CD8-positive, alpha-beta T cell (primary cell): ENCODE measurements at regions of chr10 and their contacts with region 1.

Region 1: DNA sequence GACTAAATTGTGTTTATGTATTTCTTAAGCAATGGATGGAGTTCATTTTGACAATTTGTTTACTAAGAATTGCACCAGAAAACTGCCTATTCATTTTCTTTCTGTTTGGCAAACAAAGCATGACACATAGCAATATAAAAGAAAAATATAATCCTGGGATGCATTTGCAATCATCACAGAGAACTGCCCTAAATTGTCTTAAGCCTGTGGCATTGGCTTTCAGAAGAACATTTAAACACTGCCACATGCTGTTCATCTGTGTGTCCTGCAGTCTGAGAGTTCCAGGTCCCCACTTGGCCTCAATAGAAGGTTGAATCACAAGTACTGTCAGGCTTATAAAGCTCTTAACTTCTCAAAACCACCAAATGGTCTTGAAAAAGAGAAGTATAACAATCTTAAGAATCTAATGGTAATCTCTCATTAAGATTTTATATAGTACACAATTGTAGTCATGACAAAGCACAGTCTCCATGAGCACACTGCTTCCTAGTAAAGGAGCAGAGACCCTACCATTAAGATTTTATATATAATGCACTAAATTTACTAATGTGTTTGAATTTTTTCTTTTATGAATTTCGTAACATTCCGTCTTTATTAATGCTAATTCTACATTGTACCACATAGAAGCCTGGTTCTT is 29.9 kb downstream of the RNLS start:
- DNase-seq: peak in 6 of 9 experiments; percentile 7 to 71 (median 28)
- ATAC-seq: peak; percentile 82
- H3K4me3 ChIP-seq: no peak overlapping the region
- H3K4me3 Mint-ChIP-seq: no peak overlapping the region
- H3K27ac ChIP-seq: no peak overlapping the region
- H3K27ac Mint-ChIP-seq: no peak overlapping the region
- H3K4me1 ChIP-seq: no peaks in the 10 kb centered on the region
- H3K4me1 Mint-ChIP-seq: no peaks in the 10 kb centered on the region
- H3K27me3 ChIP-seq: no peaks in the 10 kb centered on the region
- H3K27me3 Mint-ChIP-seq: no peaks in the 10 kb centered on the region
- CTCF ChIP-seq: peak; percentile 77

Region 2: DNA sequence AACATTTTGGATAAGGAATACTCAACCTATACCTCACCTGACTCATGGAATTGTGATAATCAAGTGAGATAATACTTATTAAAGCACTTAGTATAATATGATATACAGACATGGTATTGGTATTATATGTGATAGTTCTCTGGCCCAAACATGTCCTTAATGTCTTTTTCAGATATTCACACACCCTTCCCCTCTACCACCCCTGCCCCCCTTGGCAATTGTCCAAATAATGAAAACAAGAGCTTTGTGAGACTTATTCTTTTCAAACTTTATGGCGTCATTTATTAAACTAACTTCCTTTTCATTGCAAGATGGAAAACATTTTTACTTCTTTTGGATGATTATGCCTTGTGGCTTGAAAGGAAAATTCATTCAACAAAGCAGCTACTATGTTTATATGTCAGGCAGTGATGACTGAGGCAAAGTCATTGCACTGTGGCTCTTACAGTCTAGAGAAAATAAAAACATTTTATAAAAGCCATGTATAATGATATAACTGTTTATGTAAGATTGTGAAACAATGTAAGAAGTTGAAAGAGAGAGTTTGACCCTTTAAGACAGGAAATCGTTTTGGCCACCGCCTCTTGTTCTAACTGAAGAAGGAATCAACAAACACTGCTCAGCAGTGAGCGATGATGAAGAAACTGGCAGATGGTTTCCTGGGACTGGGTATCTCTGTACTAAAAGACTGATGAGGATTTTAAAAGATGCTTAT is 1021.2 kb before region 1 on chr10:
- CTCF ChIA-PET with region 1: no interaction called
- POLR2A ChIA-PET with region 1: no interaction called
- intact Hi-C with region 1: loop called (anchors 5 to 10 kb)
- DNase-seq: no peak
- ATAC-seq: no peak
- H3K4me3 ChIP-seq: no peak overlapping the region
- H3K4me3 Mint-ChIP-seq: no peak overlapping the region
- H3K27ac ChIP-seq: no peak overlapping the region
- H3K27ac Mint-ChIP-seq: no peak overlapping the region
- H3K4me1 ChIP-seq: no peaks in the 10 kb centered on the region
- H3K4me1 Mint-ChIP-seq: peaks cover 17% of the 10 kb centered on the region
- H3K27me3 ChIP-seq: no peaks in the 10 kb centered on the region
- H3K27me3 Mint-ChIP-seq: no peaks in the 10 kb centered on the region
- CTCF ChIP-seq: no peak

Region 3: DNA sequence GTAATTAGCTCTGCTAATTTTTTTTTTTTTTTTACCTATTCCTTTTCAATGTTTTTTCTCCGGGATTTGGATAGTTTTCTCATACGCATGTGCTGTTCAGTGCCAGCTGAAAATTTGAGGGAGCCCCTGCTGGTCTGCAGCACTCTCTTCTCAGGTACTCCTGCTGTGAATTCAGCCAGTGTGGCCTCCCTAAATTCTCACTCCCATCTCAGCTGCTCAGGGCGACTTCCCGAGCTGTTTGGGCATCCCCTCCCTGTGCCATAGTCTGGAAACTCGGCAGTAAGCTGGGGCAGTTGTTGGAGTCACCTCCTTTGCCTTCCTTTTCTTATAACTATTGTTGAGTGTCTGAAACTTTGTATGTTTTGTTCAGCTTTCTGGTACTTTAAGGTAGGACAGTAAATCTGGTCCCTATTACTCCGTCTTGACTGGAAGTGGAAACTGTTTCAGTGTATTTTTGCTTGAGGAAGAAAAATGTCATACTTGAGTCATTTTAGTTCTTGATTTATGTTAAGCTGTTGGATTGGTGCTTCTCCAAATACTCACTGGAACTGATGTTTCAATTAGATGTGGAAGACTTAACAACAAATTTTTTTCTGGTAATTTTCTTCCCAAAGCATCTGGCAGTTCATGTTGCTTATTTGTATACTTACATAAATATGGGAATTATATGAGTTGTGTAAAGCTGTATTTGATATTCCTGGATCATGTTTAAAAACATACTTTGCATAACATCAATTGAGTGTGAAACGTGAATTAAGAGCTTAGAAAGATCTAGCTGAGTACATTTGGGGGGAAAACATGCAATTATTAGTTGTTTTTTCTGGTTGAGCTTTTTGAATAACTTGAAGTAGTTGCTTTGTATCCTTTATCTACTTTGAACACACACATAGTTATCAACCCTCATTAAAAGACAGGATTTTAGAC is 1014.9 kb before region 1 on chr10:
- CTCF ChIA-PET with region 1: no interaction called
- POLR2A ChIA-PET with region 1: no interaction called
- intact Hi-C with region 1: loop called (anchors 5 to 10 kb)
- DNase-seq: no peak
- ATAC-seq: no peak
- H3K4me3 ChIP-seq: no peak overlapping the region
- H3K4me3 Mint-ChIP-seq: no peak overlapping the region
- H3K27ac ChIP-seq: no peak overlapping the region
- H3K27ac Mint-ChIP-seq: no peak overlapping the region
- H3K4me1 ChIP-seq: no peaks in the 10 kb centered on the region
- H3K4me1 Mint-ChIP-seq: peaks cover 11% of the 10 kb centered on the region
- H3K27me3 ChIP-seq: no peaks in the 10 kb centered on the region
- H3K27me3 Mint-ChIP-seq: no peaks in the 10 kb centered on the region
- CTCF ChIP-seq: no peak

Region 4: DNA sequence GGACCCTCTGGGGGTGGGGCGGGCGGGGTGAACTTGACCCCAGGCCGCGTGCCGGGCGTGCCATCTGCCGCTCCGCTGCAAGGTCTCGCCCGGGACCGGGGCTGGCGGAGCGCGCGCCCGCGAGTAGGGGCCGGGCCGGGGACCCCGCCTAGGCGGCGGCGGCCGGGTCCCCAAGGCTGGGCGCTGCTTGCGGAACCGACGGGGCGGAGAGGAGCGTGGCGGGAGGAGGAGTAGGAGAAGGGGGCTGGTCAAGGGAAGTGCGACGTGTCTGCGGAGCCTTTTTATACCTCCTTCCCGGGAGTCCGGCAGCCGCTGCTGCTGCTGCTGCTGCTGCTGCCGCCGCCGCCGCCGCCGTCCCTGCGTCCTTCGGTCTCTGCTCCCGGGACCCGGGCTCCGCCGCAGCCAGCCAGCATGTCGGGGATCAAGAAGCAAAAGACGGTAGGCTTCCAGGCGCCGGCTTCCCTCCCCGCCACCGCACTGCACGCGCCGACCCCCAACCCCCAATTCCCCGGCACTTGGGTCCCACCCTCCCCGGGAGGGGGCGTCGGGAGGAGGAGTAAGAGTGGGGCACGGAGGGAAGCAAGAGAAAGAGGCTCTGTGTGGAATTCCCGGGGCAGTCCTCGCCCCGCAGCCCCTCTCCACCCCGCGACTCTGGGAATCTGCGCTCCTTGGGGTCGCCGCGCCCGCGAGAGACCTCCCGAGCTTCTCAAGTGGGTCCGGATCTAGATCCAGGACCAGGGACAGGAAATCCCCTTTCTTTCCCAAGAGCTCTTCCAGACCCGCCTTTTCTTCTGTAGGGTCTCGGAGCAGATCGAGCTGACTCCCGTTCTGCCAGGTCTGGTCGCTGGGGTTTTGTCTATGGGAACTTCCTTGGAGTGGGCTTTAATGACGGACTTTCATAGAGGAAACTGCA is 893.4 kb before region 1 on chr10 and contains the start of gene PAPSS2:
- CTCF ChIA-PET with region 1: no interaction called
- POLR2A ChIA-PET with region 1: no interaction called
- intact Hi-C with region 1: loop called in 1 of 2 experiments (anchors 1 kb)
- DNase-seq: peak in 3 of 9 experiments; percentile 8 to 22 (median 20)
- ATAC-seq: peak; percentile 36
- H3K4me3 ChIP-seq: peak within 1 kb of the TSS; percentile 41 to 48
- H3K4me3 Mint-ChIP-seq: peak within 1 kb of the TSS; percentile 79
- H3K27ac ChIP-seq: no peak within 1 kb of the TSS
- H3K27ac Mint-ChIP-seq: no peak within 1 kb of the TSS
- H3K4me1 ChIP-seq: peaks cover 6% of the 10 kb centered on the region
- H3K4me1 Mint-ChIP-seq: peaks cover 11% of the 10 kb centered on the region
- H3K27me3 ChIP-seq: peaks cover 8 to 14% of the 10 kb centered on the region in 2 experiments
- H3K27me3 Mint-ChIP-seq: peaks cover 53% of the 10 kb centered on the region
- CTCF ChIP-seq: no peak
- total RNA-seq, gene PAPSS2: not detected

Region 5: GRCh38 chr10:87850742-87851205 is 702.5 kb before region 1 on chr10:
- CTCF ChIA-PET with region 1: interaction called, 62 read pairs
- POLR2A ChIA-PET with region 1: no interaction called
- intact Hi-C with region 1: loop called (anchors 1 to 2 kb)
- DNase-seq: peak; percentile 2 to 76 (median 51)
- ATAC-seq: peak; percentile 90
- H3K4me3 ChIP-seq: no peak overlapping the region
- H3K4me3 Mint-ChIP-seq: no peak overlapping the region
- H3K27ac ChIP-seq: no peak overlapping the region
- H3K27ac Mint-ChIP-seq: no peak overlapping the region
- H3K4me1 ChIP-seq: no peaks in the 10 kb centered on the region
- H3K4me1 Mint-ChIP-seq: peaks cover 19% of the 10 kb centered on the region
- H3K27me3 ChIP-seq: no peaks in the 10 kb centered on the region
- H3K27me3 Mint-ChIP-seq: no peaks in the 10 kb centered on the region
- CTCF ChIP-seq: peak; percentile 62

Region 6: DNA sequence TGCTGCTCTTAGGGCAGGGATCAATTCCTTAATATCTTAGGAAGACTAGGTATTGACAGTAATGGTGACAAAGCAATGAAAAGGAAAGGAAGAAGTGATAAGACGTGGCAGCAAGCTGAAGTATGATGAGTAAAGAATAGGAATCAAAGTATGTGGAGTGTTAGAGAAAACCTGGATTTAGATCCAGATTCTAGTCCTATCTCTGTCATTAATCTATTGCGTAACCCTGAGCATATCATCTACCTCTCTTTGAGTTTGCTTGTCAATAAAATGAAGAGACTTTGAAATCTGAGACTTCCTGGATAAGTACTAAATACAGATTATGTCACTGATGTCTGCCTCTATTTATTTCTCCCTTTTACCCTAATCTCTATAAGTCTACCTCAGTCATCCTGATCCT is 600.6 kb before region 1 on chr10:
- CTCF ChIA-PET with region 1: interaction called, 3 read pairs
- POLR2A ChIA-PET with region 1: no interaction called
- intact Hi-C with region 1: loop called in 1 of 2 experiments (anchors 10 kb)
- DNase-seq: no peak
- ATAC-seq: no peak
- H3K4me3 ChIP-seq: no peak overlapping the region
- H3K4me3 Mint-ChIP-seq: no peak overlapping the region
- H3K27ac ChIP-seq: no peak overlapping the region
- H3K27ac Mint-ChIP-seq: peak overlapping the region; percentile 13
- H3K4me1 ChIP-seq: no peaks in the 10 kb centered on the region
- H3K4me1 Mint-ChIP-seq: peaks cover 28% of the 10 kb centered on the region
- H3K27me3 ChIP-seq: no peaks in the 10 kb centered on the region
- H3K27me3 Mint-ChIP-seq: no peaks in the 10 kb centered on the region
- CTCF ChIP-seq: no peak

Region 7: GRCh38 chr10:88114368-88114767 is 438.9 kb before region 1 on chr10:
- CTCF ChIA-PET with region 1: interaction called, 9 read pairs
- POLR2A ChIA-PET with region 1: no interaction called
- intact Hi-C with region 1: loop called in 1 of 2 experiments (anchors 5 kb)
- DNase-seq: peak in 3 of 9 experiments; percentile 17 to 64 (median 52)
- ATAC-seq: peak; percentile 47
- H3K4me3 ChIP-seq: no peak overlapping the region
- H3K4me3 Mint-ChIP-seq: no peak overlapping the region
- H3K27ac ChIP-seq: no peak overlapping the region
- H3K27ac Mint-ChIP-seq: no peak overlapping the region
- H3K4me1 ChIP-seq: peaks cover 23% of the 10 kb centered on the region
- H3K4me1 Mint-ChIP-seq: peaks cover 16% of the 10 kb centered on the region
- H3K27me3 ChIP-seq: no peaks in the 10 kb centered on the region
- H3K27me3 Mint-ChIP-seq: no peaks in the 10 kb centered on the region
- CTCF ChIP-seq: no peak